CD4-positive, alpha-beta memory T cell (primary cell): ENCODE measurements at regions of chr2 and their contacts with region 1.

Region 1: GRCh38 chr2:199861132-199861774 is 10.3 kb upstream of the FTCDNL1 start:
- DNase-seq: peak in 4 of 5 donors; percentile 5 to 11 (median 6)
- H3K4me3 ChIP-seq: no peak overlapping the region
- H3K4me3 Mint-ChIP-seq: no peak overlapping the region
- H3K27ac ChIP-seq: no peak overlapping the region
- H3K27ac Mint-ChIP-seq: no peak overlapping the region
- H3K4me1 ChIP-seq: no peaks in the 10 kb centered on the region
- H3K4me1 Mint-ChIP-seq: peaks cover 0 to 1% (median 0%) of the 10 kb centered on the region in 4 donors
- H3K27me3 ChIP-seq: peaks cover 4% of the 10 kb centered on the region
- H3K27me3 Mint-ChIP-seq: peaks cover 13 to 20% of the 10 kb centered on the region in 2 donors

Region 2: GRCh38 chr2:199704358-199705238 is 156.7 kb before region 1 on chr2:
- CTCF ChIA-PET with region 1: interaction called, 11 read pairs
- POLR2A ChIA-PET with region 1: no interaction called
- intact Hi-C with region 1: no loop called
- DNase-seq: peak in 4 of 5 donors; percentile 9 to 23 (median 16)
- H3K4me3 ChIP-seq: no peak overlapping the region
- H3K4me3 Mint-ChIP-seq: no peak overlapping the region
- H3K27ac ChIP-seq: no peak overlapping the region
- H3K27ac Mint-ChIP-seq: no peak overlapping the region
- H3K4me1 ChIP-seq: no peaks in the 10 kb centered on the region
- H3K4me1 Mint-ChIP-seq: no peaks in the 10 kb centered on the region
- H3K27me3 ChIP-seq: no peaks in the 10 kb centered on the region
- H3K27me3 Mint-ChIP-seq: peaks cover 0 to 2% of the 10 kb centered on the region in 2 donors

Region 3: GRCh38 chr2:199829628-199830027 is 31.6 kb before region 1 on chr2:
- CTCF ChIA-PET with region 1: no interaction called
- POLR2A ChIA-PET with region 1: no interaction called
- intact Hi-C with region 1: no loop called
- DNase-seq: no peak
- H3K4me3 ChIP-seq: no peak overlapping the region
- H3K4me3 Mint-ChIP-seq: no peak overlapping the region
- H3K27ac ChIP-seq: no peak overlapping the region
- H3K27ac Mint-ChIP-seq: no peak overlapping the region
- H3K4me1 ChIP-seq: no peaks in the 10 kb centered on the region
- H3K4me1 Mint-ChIP-seq: no peaks in the 10 kb centered on the region
- H3K27me3 ChIP-seq: no peaks in the 10 kb centered on the region
- H3K27me3 Mint-ChIP-seq: no peaks in the 10 kb centered on the region

Region 4: DNA sequence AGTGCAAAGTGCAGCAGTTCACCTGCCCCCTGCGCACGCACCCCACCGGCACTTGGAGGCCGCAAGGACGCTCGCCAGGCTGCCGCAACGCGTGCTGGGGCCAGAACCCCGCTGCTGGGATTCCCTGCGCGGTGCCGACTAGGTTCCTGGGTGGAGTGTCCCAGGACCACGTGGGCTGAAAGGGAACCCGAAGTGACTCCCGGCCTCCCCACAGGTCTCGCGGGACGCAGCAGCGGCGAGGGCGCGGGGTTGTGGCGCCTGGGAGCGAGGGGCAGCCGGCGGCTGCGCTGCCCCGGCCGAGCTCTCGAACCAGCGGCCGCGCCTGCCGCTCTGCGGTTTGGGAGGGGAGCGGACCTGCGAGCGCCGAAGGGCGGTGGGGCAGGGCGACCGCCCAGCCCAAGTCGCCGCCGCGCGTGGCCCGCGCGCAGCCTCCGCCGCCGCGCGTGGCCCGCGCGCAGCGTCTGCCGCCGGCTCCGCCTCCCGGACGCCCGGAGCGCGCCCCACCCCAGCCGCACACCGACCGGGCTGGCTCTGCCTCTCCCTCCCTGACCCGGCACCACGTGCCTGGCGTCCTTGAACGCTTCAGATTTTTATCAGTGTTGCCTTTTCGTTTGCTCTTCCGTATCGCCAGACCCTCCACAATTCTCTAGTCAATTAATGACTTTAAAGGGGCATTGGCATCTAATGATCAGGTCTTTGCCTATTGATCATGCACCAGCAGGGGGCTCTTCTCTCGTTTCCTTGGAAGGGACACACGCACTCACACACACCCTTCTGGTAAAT is 10.3 kb before region 1 on chr2 and contains the start of gene FTCDNL1:
- CTCF ChIA-PET with region 1: interaction called, 10 read pairs
- POLR2A ChIA-PET with region 1: interaction called, 4 read pairs
- intact Hi-C with region 1: loop called (anchors 1 kb)
- DNase-seq: peak; percentile 67 to 75 (median 71)
- H3K4me3 ChIP-seq: peak within 1 kb of the TSS; percentile 53 to 73
- H3K4me3 Mint-ChIP-seq: peak within 1 kb of the TSS; percentile 93 to 100 (median 98)
- H3K27ac ChIP-seq: peak within 1 kb of the TSS; percentile 23
- H3K27ac Mint-ChIP-seq: peak within 1 kb of the TSS; percentile 57 to 96 (median 92)
- H3K4me1 ChIP-seq: peaks cover 10% of the 10 kb centered on the region
- H3K4me1 Mint-ChIP-seq: peaks cover 3 to 10% (median 7%) of the 10 kb centered on the region in 4 donors
- H3K27me3 ChIP-seq: no peaks in the 10 kb centered on the region
- H3K27me3 Mint-ChIP-seq: no peaks in the 10 kb centered on the region
- total RNA-seq, gene FTCDNL1: 1.9 to 2.3 TPM